ENCODE measurements at regions of chr19 and their contacts with region 1.

Region 1: GRCh38 chr19:48646001-48646721 is at the start of gene CA11:
- DNase-seq: peak; percentile 97
- H3K4me3 Mint-ChIP-seq: peak within 1 kb of the TSS; percentile 96
- H3K27ac Mint-ChIP-seq: peak within 1 kb of the TSS; percentile 89
- H3K4me1 Mint-ChIP-seq: peaks cover 37% of the 10 kb centered on the region
- H3K27me3 Mint-ChIP-seq: peaks cover 2% of the 10 kb centered on the region
- total RNA-seq, gene CA11: 10.9 and 12.5 TPM in 2 replicates

Region 2: GRCh38 chr19:48513289-48514122 is 132.7 kb before region 1 on chr19:
- intact Hi-C with region 1: no loop called
- DNase-seq: peak; percentile 92
- H3K4me3 Mint-ChIP-seq: no peak overlapping the region
- H3K27ac Mint-ChIP-seq: peak overlapping the region; percentile 67
- H3K4me1 Mint-ChIP-seq: peaks cover 10% of the 10 kb centered on the region
- H3K27me3 Mint-ChIP-seq: no peaks in the 10 kb centered on the region

Region 3: DNA sequence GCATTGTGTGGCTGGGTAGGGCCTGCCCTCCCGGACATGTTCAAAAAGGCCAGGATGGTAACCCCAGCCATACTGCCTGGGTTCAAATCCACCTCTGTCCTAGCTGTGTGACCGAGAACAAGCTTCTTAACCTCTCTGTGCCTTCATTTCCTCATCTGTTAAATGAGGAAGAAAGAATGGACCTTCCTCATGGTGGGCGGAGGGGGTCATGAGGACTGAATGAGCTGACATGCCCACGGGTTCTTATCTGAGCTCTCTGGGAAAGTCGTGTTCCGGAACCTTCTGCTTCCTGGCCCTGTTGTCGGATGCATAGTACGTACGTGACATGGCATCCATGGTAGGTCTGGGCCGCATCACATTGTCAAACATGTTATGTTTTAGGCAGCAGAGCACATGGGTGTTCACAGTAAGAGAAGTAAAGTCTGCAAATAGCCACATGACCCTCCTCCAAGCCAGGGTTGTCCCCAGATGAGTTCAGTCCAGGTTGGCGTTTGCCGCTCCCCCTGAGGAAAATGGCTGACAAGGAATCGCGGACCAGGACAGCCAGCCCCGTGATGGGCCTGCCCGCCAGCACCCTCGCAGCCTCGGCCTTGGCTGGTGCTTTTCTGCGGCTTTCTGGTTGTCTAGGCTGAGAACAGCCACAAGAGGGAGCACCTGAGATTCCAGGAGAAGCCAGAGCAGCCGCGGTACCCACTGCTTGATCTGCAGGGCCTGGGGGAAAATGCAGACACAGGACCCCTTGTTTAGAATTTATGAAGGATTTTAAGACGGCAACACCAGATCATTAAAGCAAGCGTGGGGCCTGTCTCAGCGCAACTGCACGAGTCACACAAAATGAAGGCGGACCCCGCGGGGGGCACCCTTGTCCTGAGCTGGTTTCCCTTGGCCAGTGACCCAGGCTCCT is 29.0 kb after region 1 on chr19:
- intact Hi-C with region 1: loop called (anchors 1 kb)
- DNase-seq: peak; percentile 93
- H3K4me3 Mint-ChIP-seq: no peak overlapping the region
- H3K27ac Mint-ChIP-seq: no peak overlapping the region
- H3K4me1 Mint-ChIP-seq: peaks cover 7% of the 10 kb centered on the region
- H3K27me3 Mint-ChIP-seq: no peaks in the 10 kb centered on the region

Region 4: GRCh38 chr19:48738557-48739399 is 92.6 kb after region 1 on chr19:
- intact Hi-C with region 1: loop called (anchors 1 kb)
- DNase-seq: peak; percentile 96
- H3K4me3 Mint-ChIP-seq: peak overlapping the region; percentile 79
- H3K27ac Mint-ChIP-seq: peak overlapping the region; percentile 80
- H3K4me1 Mint-ChIP-seq: peaks cover 11% of the 10 kb centered on the region
- H3K27me3 Mint-ChIP-seq: peaks cover 5% of the 10 kb centered on the region

Region 5: DNA sequence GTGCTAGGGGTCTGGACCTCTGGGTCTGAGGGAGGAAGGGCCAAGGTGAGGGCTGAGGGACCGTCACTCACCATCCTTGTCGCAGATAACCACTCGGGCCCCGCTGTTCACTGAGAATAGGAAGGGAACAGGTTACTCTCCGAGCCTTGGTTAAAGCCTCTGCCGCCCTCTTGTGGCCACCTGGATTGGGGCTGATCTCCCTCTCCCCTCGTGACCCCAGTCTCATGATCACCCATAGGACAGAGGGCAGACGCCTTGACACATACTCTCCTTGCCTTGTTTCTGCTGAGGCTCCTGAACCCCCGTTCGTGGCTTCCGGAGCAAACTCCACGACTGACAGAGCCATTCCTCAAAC is 189.6 kb after region 1 on chr19:
- intact Hi-C with region 1: loop called (anchors 1 kb)
- DNase-seq: peak; percentile 98
- H3K4me3 Mint-ChIP-seq: peak overlapping the region; percentile 87
- H3K27ac Mint-ChIP-seq: peak overlapping the region; percentile 76
- H3K4me1 Mint-ChIP-seq: peaks cover 20% of the 10 kb centered on the region
- H3K27me3 Mint-ChIP-seq: peaks cover 8% of the 10 kb centered on the region

Region 6: DNA sequence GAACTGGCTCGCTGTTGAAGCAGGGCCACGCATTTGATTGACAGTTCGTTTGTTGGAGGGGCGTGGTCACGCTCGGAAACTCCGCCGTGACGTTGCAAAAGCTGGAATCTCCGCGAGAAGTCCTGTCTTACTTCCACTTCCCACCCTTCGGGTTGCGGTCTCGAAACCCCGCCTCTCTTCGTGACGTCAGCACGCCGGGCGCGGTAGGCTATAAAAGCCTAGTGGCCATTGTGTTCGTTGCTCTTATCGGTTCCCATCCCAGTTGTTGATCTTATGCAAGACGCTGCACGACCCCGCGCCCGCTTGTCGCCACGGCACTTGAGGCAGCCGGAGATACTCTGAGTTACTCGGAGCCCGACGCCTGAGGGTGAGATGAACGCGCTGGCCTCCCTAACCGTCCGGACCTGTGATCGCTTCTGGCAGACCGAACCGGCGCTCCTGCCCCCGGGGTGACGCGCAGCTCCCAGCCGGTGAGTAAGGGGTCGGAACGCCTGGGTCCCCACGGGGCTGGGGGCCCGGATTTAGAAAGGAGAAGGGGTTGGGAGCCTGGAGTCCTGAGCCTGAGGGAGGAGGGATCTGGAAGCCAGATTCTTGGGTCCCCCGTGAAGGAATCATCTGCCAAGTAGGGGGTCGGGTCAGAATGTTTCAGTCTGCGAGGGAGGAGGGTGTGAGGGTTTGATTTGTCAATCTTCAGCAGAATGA is 226.2 kb after region 1 on chr19 and contains the start of gene PPP1R15A:
- intact Hi-C with region 1: loop called (anchors 5 kb)
- DNase-seq: peak; percentile 100
- H3K4me3 Mint-ChIP-seq: peak within 1 kb of the TSS; percentile 100
- H3K27ac Mint-ChIP-seq: peak within 1 kb of the TSS; percentile 100
- H3K4me1 Mint-ChIP-seq: peaks cover 39% of the 10 kb centered on the region
- H3K27me3 Mint-ChIP-seq: peaks cover 5% of the 10 kb centered on the region
- total RNA-seq, gene PPP1R15A: 40.5 and 42.1 TPM in 2 replicates

Measured in activated CD4-positive, alpha-beta T cell treated with anti-CD3 and anti-CD28 coated beads, Interleukin-2, amount 10 ng/mL, durations not matched to agents 24 days and 14 days (primary cell).